HAP-1 (cell line): ENCODE measurements at regions of chr9 and their contacts with region 1.

Region 1: GRCh38 chr9:126301985-126302603 is 24.5 kb upstream of the MVB12B start:
- DNase-seq: peak; percentile 75 to 83
- H3K4me3 ChIP-seq: no peak overlapping the region
- H3K4me1 ChIP-seq: peaks cover 6% of the 10 kb centered on the region
- H3K27me3 ChIP-seq: no peaks in the 10 kb centered on the region

Region 2: GRCh38 chr9:126398403-126399058 is 96.4 kb after region 1 on chr9:
- in situ Hi-C with region 1: loop called (anchors 5 kb)
- DNase-seq: peak; percentile 49 to 86
- H3K4me3 ChIP-seq: no peak overlapping the region
- H3K4me1 ChIP-seq: no peaks in the 10 kb centered on the region
- H3K27me3 ChIP-seq: no peaks in the 10 kb centered on the region

Region 3: DNA sequence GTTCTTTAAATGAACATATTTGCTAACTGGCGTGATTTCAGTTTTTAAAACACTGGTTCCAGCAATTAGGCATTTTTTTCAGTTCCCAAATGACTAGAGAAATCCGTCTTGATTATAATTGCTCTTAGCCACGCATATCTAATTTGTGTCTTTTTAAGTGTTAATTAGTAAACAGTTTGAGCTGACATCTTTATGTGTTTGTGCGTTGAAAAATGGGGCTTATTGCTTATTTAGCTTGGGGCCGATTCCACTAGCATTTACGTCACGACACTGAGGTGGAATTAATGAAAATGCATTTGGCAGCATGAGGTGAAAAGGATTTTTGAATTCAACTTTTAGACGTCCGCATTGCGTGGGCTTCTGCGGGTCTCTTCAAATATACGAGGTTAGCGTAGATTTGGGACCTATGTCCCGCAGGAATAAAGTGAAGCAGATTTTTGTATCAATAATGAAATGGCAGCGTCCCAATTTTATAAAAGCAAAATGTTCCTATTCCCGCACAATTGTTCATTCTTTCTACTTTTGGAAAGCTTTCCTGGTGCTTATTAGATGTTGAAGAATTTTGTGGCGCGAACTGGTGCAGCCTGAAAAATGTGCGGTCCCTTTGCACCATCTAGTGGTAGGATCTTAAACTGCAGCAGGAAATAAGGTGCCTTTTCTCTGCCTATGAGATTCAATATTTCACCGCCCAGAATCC is 188.9 kb after region 1 on chr9:
- in situ Hi-C with region 1: loop called (anchors 5 kb)
- DNase-seq: peak; percentile 60 to 71
- H3K4me3 ChIP-seq: no peak overlapping the region
- H3K4me1 ChIP-seq: peaks cover 7% of the 10 kb centered on the region; the same call in 1 of the 2 replicates
- H3K27me3 ChIP-seq: no peaks in the 10 kb centered on the region